AG04450 (cell line): ENCODE measurements at regions of chr11 and their contacts with region 1.

Region 1: GRCh38 chr11:59158206-59159068 is 13.5 kb upstream of the DTX4 start:
- DNase-seq: peak; percentile 37
- H3K4me3 ChIP-seq: no peak overlapping the region
- H3K27ac ChIP-seq: no peak overlapping the region
- H3K27me3 ChIP-seq: peaks cover 8% of the 10 kb centered on the region
- CTCF ChIP-seq: peak; percentile 85

Region 2: DNA sequence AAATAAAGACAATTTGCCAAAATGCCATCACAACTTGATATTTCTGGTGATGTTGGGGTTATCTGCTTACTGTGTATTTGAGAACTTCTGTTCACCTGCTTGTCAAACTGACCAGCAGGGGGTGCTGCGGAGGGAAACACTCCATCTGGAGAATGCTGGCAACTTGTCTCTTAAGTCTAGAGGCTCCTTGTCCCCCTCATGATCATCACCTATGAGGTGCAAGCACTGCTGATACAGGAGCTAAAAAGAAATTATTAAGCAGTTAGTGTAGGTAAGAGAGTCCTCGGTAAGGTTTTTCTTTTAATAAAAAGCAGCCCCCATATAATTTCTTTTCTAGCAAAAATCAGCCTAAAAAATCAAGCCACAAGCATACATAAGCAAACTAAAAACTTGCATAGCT is 105.0 kb before region 1 on chr11:
- CTCF ChIA-PET with region 1: interaction called, 75 read pairs
- POLR2A ChIA-PET with region 1: no interaction called
- DNase-seq: peak; percentile 37
- H3K4me3 ChIP-seq: no peak overlapping the region
- H3K27ac ChIP-seq: no peak overlapping the region
- H3K27me3 ChIP-seq: peaks cover 2% of the 10 kb centered on the region
- CTCF ChIP-seq: peak; percentile 77

Region 3: DNA sequence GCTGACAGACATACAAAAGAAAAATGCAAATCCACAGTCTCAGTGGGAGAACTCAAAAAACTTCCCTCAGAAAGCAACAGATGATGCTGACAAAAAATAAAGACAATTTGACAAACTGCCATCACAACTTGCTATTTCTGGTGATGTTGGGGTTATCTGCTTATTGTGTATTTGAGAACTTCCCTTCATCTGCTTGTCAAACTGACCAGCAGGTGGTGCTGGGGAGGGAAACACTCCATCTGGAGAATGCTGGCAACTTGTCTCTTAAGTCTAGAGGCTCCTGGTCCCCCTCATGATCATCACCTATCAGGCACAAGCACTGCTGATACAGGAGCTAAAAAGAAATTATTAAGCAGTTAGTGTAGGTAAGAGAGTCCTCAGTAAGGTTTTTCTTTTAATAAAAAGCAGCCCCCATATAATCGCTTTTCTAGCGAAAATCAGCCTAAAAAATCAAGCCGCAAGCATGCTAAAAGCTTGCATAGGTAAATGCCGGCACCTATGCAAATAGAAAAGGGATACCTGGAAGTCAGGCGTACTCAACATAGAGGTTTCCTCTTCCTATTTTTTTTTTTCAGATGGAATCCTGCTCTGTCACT is 61.2 kb before region 1 on chr11:
- CTCF ChIA-PET with region 1: interaction called, 58 read pairs
- POLR2A ChIA-PET with region 1: no interaction called
- DNase-seq: peak; percentile 46
- H3K4me3 ChIP-seq: no peak overlapping the region
- H3K27ac ChIP-seq: no peak overlapping the region
- H3K27me3 ChIP-seq: peaks cover 13% of the 10 kb centered on the region
- CTCF ChIP-seq: peak; percentile 78

Region 4: GRCh38 chr11:59106363-59107336 is 51.8 kb before region 1 on chr11 and contains the start of gene FAM111B:
- CTCF ChIA-PET with region 1: interaction called, 22 read pairs
- POLR2A ChIA-PET with region 1: interaction called, 4 read pairs
- DNase-seq: peak; percentile 60
- H3K4me3 ChIP-seq: peak within 1 kb of the TSS; percentile 69
- H3K27ac ChIP-seq: no peak within 1 kb of the TSS
- H3K27me3 ChIP-seq: peaks cover 2% of the 10 kb centered on the region
- CTCF ChIP-seq: peak; percentile 18; the same call in 1 of the 2 replicates
- polyA plus RNA-seq, gene FAM111B: 1.6 and 2.7 TPM in 2 replicates

Region 5: DNA sequence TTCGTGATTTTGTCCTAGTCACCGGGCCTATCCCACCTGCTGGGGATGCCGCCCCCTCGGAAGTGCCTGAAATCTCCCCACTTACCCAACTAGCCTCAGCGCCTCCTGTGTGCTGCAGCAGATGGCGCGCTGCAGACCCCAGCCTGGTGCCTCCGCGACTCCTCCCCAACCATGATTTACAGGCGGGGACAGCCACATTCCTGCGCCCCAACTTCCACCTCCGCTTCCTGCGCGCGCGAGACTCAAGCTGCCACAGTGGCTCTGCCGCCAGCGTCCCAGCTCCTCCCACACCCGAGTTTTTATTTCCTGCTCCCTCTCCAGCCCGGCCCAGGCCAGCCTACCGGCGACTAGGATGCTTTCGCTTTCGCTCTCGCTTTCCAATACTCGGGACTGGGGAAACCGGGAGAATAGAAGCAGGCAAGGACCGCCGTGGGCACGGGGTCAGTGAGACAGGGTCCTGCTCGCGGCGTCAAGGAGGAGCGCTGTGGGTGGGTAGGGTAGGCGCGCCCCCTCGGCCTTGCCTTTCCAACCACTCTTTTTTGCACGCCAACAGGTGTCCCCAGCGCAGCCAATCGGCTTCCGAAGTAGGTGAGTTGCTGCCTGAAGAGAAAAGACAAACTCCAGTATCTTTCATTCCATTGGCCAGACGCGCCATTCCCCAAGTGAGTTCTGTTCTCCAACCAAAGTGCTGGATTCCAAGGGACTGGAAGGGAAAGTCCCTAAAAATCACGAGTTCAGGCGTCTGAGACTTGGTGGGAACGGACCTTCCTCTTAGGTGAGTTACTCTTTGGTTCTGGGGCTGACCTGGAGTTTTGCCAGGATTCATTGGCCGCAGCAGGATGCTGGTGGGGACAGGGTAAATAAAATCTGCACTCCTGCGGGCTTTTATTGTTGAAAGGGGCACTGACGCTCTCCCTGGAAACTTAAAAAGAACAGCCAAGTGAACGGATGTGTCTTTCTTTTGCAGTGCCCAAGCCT is 15.6 kb before region 1 on chr11 and contains the start of gene FAM111A:
- CTCF ChIA-PET with region 1: interaction called, 143 read pairs
- POLR2A ChIA-PET with region 1: interaction called, 8 read pairs
- DNase-seq: peak; percentile 65
- H3K4me3 ChIP-seq: peak within 1 kb of the TSS; percentile 90
- H3K27ac ChIP-seq: peak within 1 kb of the TSS; percentile 97
- H3K27me3 ChIP-seq: no peaks in the 10 kb centered on the region
- CTCF ChIP-seq: peak; percentile 43
- polyA plus RNA-seq, gene FAM111A: 20.6 and 23.1 TPM in 2 replicates

Region 6: GRCh38 chr11:59186130-59186594 is 27.7 kb after region 1 on chr11:
- CTCF ChIA-PET with region 1: interaction called, 17 read pairs
- POLR2A ChIA-PET with region 1: no interaction called
- DNase-seq: no peak
- H3K4me3 ChIP-seq: no peak overlapping the region
- H3K27ac ChIP-seq: no peak overlapping the region
- H3K27me3 ChIP-seq: no peaks in the 10 kb centered on the region
- CTCF ChIP-seq: peak; percentile 59

Region 7: GRCh38 chr11:59216641-59217564 is 58.5 kb after region 1 on chr11:
- CTCF ChIA-PET with region 1: interaction called, 15 read pairs
- POLR2A ChIA-PET with region 1: no interaction called
- DNase-seq: no peak
- H3K4me3 ChIP-seq: no peak overlapping the region
- H3K27ac ChIP-seq: no peak overlapping the region
- H3K27me3 ChIP-seq: peaks cover 22% of the 10 kb centered on the region
- CTCF ChIP-seq: no peak